Activated CD4-positive, alpha-beta T cell treated with anti-CD3 and anti-CD28 coated beads, Interleukin-2, amount 10 ng/mL, durations not matched to agents 24 days and 14 days (primary cell): ENCODE measurements at regions of chr12 and their contacts with region 1.

Region 1: DNA sequence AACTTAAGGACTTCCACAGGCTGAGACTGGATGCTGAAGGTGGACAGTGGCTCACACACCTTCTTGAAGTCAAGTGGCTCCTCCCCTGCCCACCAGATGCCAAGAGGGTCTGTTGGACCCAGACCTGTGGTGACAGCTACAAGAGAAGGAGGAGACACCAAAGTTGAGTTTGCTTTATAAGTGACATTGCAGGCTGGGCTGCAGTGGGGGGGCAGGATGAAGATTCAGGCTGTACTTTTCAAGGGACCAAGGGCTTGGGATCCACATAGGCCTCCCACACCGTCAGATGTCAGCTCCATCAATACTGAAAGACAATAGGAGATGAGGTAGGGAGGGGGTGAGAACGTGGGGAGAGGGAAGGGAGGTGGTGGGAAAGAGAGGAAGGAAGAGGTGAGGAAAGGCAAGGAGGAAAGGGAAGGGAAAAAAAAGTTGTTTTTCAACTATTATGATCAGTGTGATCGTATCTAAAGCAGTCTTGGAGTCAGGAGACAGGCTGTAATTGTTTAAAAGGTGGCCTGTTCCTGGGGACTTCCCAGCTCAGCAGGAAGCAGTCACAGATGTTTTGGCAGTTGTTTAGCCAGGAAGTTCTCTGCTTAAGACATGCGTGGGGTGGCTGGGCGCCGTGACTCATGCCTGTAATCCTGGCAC is 84.1 kb upstream of the RESF1 start:
- DNase-seq: peak; percentile 89
- H3K4me3 Mint-ChIP-seq: peak overlapping the region; percentile 68
- H3K27ac Mint-ChIP-seq: peak overlapping the region; percentile 99
- H3K4me1 Mint-ChIP-seq: peaks cover 20% of the 10 kb centered on the region
- H3K27me3 Mint-ChIP-seq: no peaks in the 10 kb centered on the region

Region 2: DNA sequence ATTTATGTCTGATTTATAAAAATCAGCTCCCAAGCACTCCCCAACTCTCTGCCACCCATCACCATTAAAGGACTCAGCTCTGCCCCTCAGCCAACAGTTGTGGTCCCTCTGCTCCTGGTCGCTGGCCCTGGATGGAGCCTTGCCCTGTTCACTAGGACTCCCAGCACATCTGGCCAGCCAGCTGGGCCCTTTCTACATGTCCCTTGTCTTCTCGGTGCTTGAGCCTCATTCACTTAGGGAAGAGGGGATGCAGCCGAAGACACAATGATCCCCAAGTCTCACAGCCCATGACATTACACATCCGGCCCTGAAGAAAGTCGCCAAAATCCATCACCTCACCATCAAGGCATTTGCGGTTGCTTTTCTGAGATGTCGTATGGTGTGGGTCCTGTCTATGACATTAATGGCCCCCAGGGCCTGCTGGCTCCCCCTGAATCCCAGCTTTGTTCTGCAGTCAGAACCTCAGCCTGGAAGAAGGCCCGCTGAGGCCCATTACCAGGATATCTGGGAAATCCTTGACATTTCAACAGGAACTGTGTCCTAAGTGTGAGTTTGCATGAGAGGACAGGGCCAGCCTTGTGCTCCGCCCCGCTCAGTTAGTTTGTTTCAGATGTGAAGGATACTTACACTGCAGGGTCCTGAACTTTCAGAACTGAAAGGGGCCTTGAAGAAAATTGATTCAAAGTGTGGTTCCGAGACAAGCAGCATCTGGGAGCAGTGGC is 929.5 kb before region 1 on chr12:
- intact Hi-C with region 1: no loop called
- DNase-seq: no peak
- H3K4me3 Mint-ChIP-seq: no peak overlapping the region
- H3K27ac Mint-ChIP-seq: no peak overlapping the region
- H3K4me1 Mint-ChIP-seq: no peaks in the 10 kb centered on the region
- H3K27me3 Mint-ChIP-seq: peaks cover 3% of the 10 kb centered on the region

Region 3: GRCh38 chr12:31813305-31813704 is 61.8 kb before region 1 on chr12:
- intact Hi-C with region 1: loop called (anchors 2 kb)
- DNase-seq: no peak
- H3K4me3 Mint-ChIP-seq: no peak overlapping the region
- H3K27ac Mint-ChIP-seq: no peak overlapping the region
- H3K4me1 Mint-ChIP-seq: peaks cover 12% of the 10 kb centered on the region
- H3K27me3 Mint-ChIP-seq: no peaks in the 10 kb centered on the region

Region 4: GRCh38 chr12:31859232-31859977 is 15.7 kb before region 1 on chr12:
- intact Hi-C with region 1: no loop called
- DNase-seq: no peak
- H3K4me3 Mint-ChIP-seq: no peak overlapping the region
- H3K27ac Mint-ChIP-seq: no peak overlapping the region
- H3K4me1 Mint-ChIP-seq: peaks cover 4% of the 10 kb centered on the region
- H3K27me3 Mint-ChIP-seq: no peaks in the 10 kb centered on the region